Aorta (tissue), 5 donors: ENCODE measurements at regions of chr9 and their contacts with region 1.

Region 1: GRCh38 chr9:129968690-129969501 is 74.1 kb downstream of the FNBP1 start:
- DNase-seq: no peak
- ATAC-seq: peak; percentile 63
- H3K4me3 ChIP-seq: no peak overlapping the region
- H3K27ac ChIP-seq: no peak overlapping the region
- H3K4me1 ChIP-seq: peaks cover 0 to 1% of the 10 kb centered on the region in 2 donors
- H3K27me3 ChIP-seq: no peaks in the 10 kb centered on the region

Region 2: GRCh38 chr9:130023144-130023787 is 54.4 kb after region 1 on chr9:
- intact Hi-C with region 1: loop called in 1 of 2 experiments (anchors 5 kb)
- DNase-seq: no peak
- ATAC-seq: peak; percentile 33
- H3K4me3 ChIP-seq: no peak overlapping the region
- H3K27ac ChIP-seq: peak overlapping the region; percentile 34 to 79
- H3K4me1 ChIP-seq: peaks cover 0 to 2% of the 10 kb centered on the region in 2 donors
- H3K27me3 ChIP-seq: no peaks in the 10 kb centered on the region

Region 3: GRCh38 chr9:130042833-130043653 is 74.1 kb after region 1 on chr9 and contains the start of gene FNBP1:
- intact Hi-C with region 1: loop called in 1 of 2 experiments (anchors 5 kb)
- DNase-seq: peak; percentile 88 to 94
- ATAC-seq: peak; percentile 95
- H3K4me3 ChIP-seq: peak within 1 kb of the TSS; percentile 90 to 96
- H3K27ac ChIP-seq: peak within 1 kb of the TSS; percentile 46 to 79
- H3K4me1 ChIP-seq: no peaks in the 10 kb centered on the region
- H3K27me3 ChIP-seq: no peaks in the 10 kb centered on the region
- total RNA-seq, gene FNBP1: 92.2 to 92.9 TPM